Caco-2 (cell line): ENCODE measurements at regions of chr11 and their contacts with region 1.

Region 1: GRCh38 chr11:83819933-83820549 is 533.9 kb upstream of the CCDC90B start:
- DNase-seq: peak in 1 of 2 experiments; percentile 53
- H3K4me3 ChIP-seq: no peak overlapping the region
- H3K4me3 Mint-ChIP-seq: no peak overlapping the region
- H3K27ac Mint-ChIP-seq: no peak overlapping the region
- H3K4me1 ChIP-seq: no peaks in the 10 kb centered on the region
- H3K4me1 Mint-ChIP-seq: no peaks in the 10 kb centered on the region
- H3K27me3 ChIP-seq: no peaks in the 10 kb centered on the region
- H3K27me3 Mint-ChIP-seq: peaks cover 5% of the 10 kb centered on the region
- CTCF ChIP-seq: peak; percentile 67 to 80

Region 2: GRCh38 chr11:82718307-82718706 is 1101.7 kb before region 1 on chr11:
- CTCF ChIA-PET with region 1: no interaction called
- POLR2A ChIA-PET with region 1: no interaction called
- intact Hi-C with region 1: loop called (anchors 1 kb)
- DNase-seq: peak in 1 of 2 experiments; percentile 35
- H3K4me3 ChIP-seq: no peak overlapping the region
- H3K4me3 Mint-ChIP-seq: no peak overlapping the region
- H3K27ac Mint-ChIP-seq: no peak overlapping the region
- H3K4me1 ChIP-seq: no peaks in the 10 kb centered on the region
- H3K4me1 Mint-ChIP-seq: no peaks in the 10 kb centered on the region
- H3K27me3 ChIP-seq: peaks cover 1% of the 10 kb centered on the region; the same call in 1 of the 2 replicates
- H3K27me3 Mint-ChIP-seq: peaks cover 4% of the 10 kb centered on the region
- CTCF ChIP-seq: peak; percentile 88 to 94

Region 3: DNA sequence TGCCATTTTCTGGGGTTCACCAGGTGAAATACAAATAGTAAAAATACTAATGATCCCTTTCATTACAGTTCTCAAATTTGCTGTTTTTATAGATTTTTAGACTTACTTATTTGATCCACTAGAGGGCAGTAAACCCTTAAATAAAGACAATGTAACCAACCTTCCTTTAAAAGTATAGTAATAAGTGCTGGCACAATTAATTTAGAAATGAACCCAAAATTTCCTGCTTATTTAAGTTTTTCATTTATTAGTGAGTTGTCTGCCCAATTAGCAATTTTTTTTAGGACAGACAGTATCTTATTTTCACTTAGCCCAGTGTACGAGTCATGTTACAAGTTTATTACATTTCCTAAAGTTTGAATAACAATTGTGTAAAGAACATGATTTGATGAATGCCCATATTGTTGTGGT is 913.8 kb before region 1 on chr11:
- CTCF ChIA-PET with region 1: no interaction called
- POLR2A ChIA-PET with region 1: no interaction called
- intact Hi-C with region 1: loop called (anchors 1 kb)
- DNase-seq: no peak
- H3K4me3 ChIP-seq: no peak overlapping the region
- H3K4me3 Mint-ChIP-seq: no peak overlapping the region
- H3K27ac Mint-ChIP-seq: no peak overlapping the region
- H3K4me1 ChIP-seq: no peaks in the 10 kb centered on the region; the same call in 1 of the 2 replicates
- H3K4me1 Mint-ChIP-seq: peaks cover 21% of the 10 kb centered on the region
- H3K27me3 ChIP-seq: no peaks in the 10 kb centered on the region
- H3K27me3 Mint-ChIP-seq: no peaks in the 10 kb centered on the region
- CTCF ChIP-seq: peak; percentile 59 to 75

Region 4: GRCh38 chr11:83219095-83219494 is 600.9 kb before region 1 on chr11:
- CTCF ChIA-PET with region 1: no interaction called
- POLR2A ChIA-PET with region 1: no interaction called
- intact Hi-C with region 1: loop called (anchors 1 kb)
- DNase-seq: peak in 1 of 2 experiments; percentile 56
- H3K4me3 ChIP-seq: no peak overlapping the region
- H3K4me3 Mint-ChIP-seq: no peak overlapping the region
- H3K27ac Mint-ChIP-seq: no peak overlapping the region
- H3K4me1 ChIP-seq: no peaks in the 10 kb centered on the region
- H3K4me1 Mint-ChIP-seq: no peaks in the 10 kb centered on the region
- H3K27me3 ChIP-seq: no peaks in the 10 kb centered on the region; the same call in 1 of the 2 replicates
- H3K27me3 Mint-ChIP-seq: no peaks in the 10 kb centered on the region
- CTCF ChIP-seq: peak; percentile 75 to 79

Region 5: DNA sequence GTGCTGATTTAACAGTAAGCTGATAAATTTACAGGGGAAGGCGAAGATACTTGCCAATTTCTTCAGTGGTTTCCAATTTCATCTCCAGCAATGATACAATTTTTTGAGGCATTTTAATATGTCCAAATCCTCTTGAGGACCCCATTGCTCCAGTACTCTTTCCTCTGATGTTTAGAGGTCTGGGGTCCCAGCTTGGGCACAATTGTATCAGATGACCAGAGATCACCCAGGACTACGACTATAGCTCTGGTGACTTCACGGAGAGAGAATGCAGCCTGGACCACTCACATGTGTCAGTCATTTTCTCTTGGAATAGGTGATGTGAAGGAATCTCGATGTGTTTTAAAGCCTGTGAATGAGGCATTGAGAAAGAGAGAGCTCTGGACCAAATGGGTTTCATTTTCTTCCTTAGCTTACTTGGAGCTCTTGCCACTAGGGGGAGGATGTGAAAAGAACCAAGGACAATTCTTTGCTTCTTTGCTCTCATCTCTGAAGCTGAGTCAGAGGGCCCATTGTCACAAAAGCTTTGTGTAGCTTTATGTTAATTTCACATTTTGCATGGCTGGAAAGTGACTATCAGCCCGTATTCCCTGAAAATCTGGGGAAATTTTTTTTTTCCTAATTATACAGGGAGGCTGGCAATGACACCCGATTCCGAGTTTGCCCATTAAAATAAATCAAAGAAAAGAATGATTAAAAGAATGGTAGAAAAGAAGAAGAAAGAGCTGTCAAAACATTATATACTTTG is 527.2 kb before region 1 on chr11:
- CTCF ChIA-PET with region 1: interaction called, 43 read pairs
- POLR2A ChIA-PET with region 1: no interaction called
- intact Hi-C with region 1: loop called (anchors 1 kb)
- DNase-seq: peak; percentile 51 to 77
- H3K4me3 ChIP-seq: no peak overlapping the region
- H3K4me3 Mint-ChIP-seq: no peak overlapping the region
- H3K27ac Mint-ChIP-seq: no peak overlapping the region
- H3K4me1 ChIP-seq: no peaks in the 10 kb centered on the region
- H3K4me1 Mint-ChIP-seq: no peaks in the 10 kb centered on the region
- H3K27me3 ChIP-seq: no peaks in the 10 kb centered on the region; the same call in 1 of the 2 replicates
- H3K27me3 Mint-ChIP-seq: peaks cover 4% of the 10 kb centered on the region
- CTCF ChIP-seq: peak; percentile 89 to 95

Region 6: DNA sequence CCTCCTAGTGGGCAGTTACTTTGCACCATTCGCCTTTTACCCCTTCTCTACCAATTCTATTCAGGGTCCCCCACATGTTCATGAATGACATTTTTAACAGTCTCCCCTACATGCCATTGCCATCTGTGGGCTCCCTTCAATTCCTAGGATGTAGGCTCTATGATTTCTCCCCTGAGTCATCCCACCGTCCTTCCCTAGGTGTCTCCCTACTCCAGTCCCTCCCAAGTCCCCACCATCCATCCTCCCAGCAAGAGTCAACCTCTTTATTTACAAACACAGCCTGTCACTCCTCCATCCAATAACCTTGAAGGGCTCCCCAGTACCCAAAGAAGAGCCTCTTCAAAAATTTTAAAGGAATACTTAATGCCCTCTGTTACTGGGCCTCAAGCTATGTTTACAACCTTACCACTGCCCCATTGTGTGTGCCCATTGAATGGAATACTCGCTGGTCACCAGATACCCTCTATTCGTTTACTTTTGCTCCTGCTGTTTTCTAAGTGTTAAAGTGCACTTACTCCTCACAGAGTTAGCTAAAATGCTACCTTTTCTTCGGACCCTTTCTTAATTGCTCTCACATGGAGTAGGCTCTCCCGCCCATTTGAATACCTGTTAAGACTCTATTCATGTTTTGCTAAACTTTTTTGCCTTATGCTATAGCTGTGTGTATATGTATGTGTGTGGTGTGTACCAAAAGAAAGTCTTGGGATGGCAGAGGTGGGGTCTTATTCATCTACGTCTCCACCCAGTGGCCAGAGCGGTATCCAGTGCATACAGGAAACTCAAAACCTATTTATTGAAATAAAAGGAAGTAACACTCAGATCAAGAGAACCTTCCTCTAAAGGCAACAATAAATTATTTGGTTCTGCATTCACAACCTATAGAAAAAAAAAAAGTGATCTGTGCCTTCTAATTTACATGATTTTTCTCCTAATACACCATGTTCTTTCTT is 298.1 kb before region 1 on chr11:
- CTCF ChIA-PET with region 1: no interaction called
- POLR2A ChIA-PET with region 1: no interaction called
- intact Hi-C with region 1: loop called (anchors 1 kb)
- DNase-seq: peak; percentile 52 to 58
- H3K4me3 ChIP-seq: no peak overlapping the region
- H3K4me3 Mint-ChIP-seq: no peak overlapping the region
- H3K27ac Mint-ChIP-seq: no peak overlapping the region
- H3K4me1 ChIP-seq: no peaks in the 10 kb centered on the region
- H3K4me1 Mint-ChIP-seq: no peaks in the 10 kb centered on the region
- H3K27me3 ChIP-seq: no peaks in the 10 kb centered on the region
- H3K27me3 Mint-ChIP-seq: no peaks in the 10 kb centered on the region
- CTCF ChIP-seq: peak; percentile 58 to 59